ENCODE measurements at regions of chr6 and their contacts with region 1.

Region 1: DNA sequence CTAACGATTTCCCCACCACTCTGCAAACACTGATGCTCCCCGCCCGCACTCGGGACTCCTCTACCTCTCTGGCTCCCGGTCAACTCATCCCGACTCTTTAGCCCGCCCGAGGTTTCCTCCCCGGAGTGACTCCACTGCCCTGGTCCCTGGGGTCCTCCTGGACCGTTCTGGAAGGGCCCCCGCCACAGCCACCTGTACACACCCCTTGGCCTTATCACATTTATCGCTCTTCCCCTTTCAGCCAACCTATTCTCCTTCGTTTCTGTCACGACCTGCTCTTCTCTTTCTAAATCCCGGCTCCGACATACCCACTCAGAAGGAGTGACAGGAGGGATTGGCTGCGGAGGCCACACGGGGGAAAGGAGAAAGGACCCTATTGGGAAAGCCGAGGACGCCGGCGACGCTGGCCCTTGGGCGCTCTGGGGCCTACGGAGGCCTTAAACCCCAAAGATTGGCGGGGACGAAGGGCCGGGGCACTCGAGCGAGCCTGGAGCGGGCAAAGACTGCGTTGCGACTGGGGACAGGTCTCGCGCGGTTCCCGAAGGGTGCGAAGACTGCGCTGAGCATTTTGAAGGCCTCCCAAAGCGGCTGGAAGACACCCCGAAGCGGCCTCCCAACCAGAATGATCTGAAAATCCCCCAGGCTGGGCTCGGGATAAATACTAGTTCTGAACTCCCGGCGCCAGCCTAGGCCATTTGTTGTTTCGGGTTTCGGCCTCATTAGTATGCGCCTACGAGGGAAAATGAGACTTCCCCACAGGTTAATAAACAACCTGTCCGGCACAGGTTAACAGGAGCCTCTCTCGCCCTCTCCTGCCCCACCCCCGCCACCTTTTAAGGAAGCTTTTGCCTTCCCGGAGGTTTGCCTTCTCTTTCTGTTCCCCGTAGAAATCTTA is 9.2 kb downstream of the SIM1 start:
- DNase-seq: no peak
- CTCF ChIP-seq: no peak

Region 2: GRCh38 chr6:99606656-99607415 is 848.6 kb before region 1 on chr6 and contains the start of gene PRDM13:
- in situ Hi-C with region 1: loop called (anchors 5 kb)
- DNase-seq: no peak
- CTCF ChIP-seq: no peak

Region 3: DNA sequence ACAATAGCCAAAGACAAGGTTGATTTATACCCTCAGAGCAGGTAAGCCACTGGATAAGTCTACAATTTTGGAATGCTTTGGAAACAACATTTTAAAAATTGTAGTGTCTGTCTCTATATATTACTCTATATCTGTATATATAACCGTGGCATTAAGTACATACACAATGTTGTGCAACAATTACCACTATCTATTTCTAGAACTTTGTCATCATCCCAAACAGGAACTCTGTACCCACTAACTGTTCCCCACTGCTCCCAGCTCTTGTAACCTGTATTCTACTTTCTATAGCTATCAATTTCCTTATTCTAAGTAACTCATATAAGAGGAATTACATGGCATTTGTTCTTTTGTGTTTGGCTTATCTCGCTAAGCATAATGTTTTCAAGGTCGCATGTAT is 503.8 kb after region 1 on chr6:
- in situ Hi-C with region 1: no loop called
- DNase-seq: no peak
- CTCF ChIP-seq: no peak

Measured in GM13977 (cell line).